ENCODE measurements at regions of chr2 and their contacts with region 1.

Region 1: DNA sequence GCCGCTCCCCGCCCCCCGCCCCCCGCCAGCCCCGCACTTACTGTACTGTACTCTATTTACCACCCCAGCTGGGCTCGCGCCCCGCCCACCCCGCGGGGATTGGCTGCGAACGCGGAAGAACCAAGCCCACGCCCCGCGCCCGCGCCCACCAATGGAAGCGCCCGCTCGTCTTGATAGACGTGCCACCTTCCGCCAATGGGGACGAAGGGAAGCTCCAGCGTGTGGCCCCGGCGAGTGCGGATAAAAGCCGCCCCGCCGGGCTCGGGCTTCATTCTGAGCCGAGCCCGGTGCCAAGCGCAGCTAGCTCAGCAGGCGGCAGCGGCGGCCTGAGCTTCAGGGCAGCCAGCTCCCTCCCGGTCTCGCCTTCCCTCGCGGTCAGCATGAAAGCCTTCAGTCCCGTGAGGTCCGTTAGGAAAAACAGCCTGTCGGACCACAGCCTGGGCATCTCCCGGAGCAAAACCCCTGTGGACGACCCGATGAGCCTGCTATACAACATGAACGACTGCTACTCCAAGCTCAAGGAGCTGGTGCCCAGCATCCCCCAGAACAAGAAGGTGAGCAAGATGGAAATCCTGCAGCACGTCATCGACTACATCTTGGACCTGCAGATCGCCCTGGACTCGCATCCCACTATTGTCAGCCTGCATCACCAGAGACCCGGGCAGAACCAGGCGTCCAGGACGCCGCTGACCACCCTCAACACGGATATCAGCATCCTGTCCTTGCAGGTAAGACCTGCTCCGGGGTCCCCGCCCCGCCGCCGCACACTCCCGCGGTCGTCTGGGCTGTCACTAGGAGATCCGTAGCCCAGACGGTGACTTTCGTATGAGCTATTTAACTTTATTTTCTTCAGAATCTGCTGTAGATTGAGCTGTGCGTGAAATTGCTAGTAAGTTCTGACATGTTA is at the start of gene ID2:
- DNase-seq: peak; percentile 99
- H3K4me3 ChIP-seq: peak within 1 kb of the TSS; percentile 100
- H3K27ac ChIP-seq: peak within 1 kb of the TSS; percentile 100
- H3K4me1 ChIP-seq: peaks cover 32% of the 10 kb centered on the region
- H3K27me3 ChIP-seq: no peaks in the 10 kb centered on the region
- total RNA-seq, gene ID2: 548 and 668 TPM in 2 replicates

Region 2: DNA sequence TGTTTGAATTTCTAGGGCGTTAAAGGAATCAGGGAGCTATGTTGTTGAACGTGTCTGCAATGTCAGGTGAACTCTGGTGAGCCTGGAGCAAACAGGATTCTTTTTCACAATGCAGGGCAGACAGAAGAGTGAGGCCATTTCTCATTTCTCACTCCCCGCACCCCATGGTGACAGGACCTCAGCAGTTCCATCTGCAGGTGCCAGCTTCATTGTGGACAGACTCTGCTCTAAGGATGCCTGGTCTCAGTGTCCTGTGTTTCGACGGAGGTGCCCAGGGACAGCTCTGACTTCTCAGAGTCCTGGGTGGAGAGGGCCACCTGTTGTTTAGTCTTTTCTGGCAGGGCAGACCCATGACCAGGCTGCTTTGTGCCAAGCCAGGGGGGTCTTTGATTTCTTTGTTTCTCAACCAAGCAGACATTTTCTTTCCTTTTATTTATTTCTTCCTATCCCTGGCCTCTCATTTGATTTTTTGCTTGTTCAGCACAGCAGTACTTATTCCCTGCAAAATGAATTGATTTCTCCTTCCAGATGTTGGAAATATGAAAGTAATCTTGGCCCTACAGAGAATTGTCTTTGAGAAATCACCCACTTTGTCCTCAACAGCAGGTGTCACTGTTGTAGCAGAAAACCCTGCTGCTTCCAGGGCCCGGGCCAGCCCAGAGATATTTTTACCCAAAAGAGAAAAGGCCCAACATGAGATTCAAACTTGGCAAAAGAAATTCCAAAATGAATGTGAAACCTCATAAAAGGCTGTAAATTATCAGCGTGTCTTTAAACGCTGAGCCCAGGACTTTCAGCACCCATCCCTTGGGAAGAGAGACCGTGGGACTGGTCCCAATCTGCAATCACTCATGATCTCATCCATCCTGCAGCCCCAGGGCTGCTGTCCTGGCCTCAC is 1563.2 kb before region 1 on chr2:
- in situ Hi-C with region 1: loop called (anchors 25 kb)
- DNase-seq: peak; percentile 73
- H3K4me3 ChIP-seq: no peak overlapping the region
- H3K27ac ChIP-seq: no peak overlapping the region
- H3K4me1 ChIP-seq: no peaks in the 10 kb centered on the region
- H3K27me3 ChIP-seq: no peaks in the 10 kb centered on the region

Region 3: GRCh38 chr2:7203055-7203467 is 1479.0 kb before region 1 on chr2:
- in situ Hi-C with region 1: loop called (anchors 25 kb)
- DNase-seq: peak; percentile 83
- H3K4me3 ChIP-seq: no peak overlapping the region
- H3K27ac ChIP-seq: no peak overlapping the region
- H3K4me1 ChIP-seq: no peaks in the 10 kb centered on the region
- H3K27me3 ChIP-seq: no peaks in the 10 kb centered on the region; the same call in 1 of the 2 replicates

Region 4: GRCh38 chr2:7424481-7424880 is 1257.6 kb before region 1 on chr2:
- in situ Hi-C with region 1: loop called (anchors 5 kb)
- DNase-seq: no peak
- H3K4me3 ChIP-seq: no peak overlapping the region
- H3K27ac ChIP-seq: no peak overlapping the region
- H3K4me1 ChIP-seq: peaks cover 9% of the 10 kb centered on the region
- H3K27me3 ChIP-seq: no peaks in the 10 kb centered on the region; the same call in 1 of the 2 replicates

Region 5: GRCh38 chr2:7835693-7836680 is 846.1 kb before region 1 on chr2:
- in situ Hi-C with region 1: loop called (anchors 25 kb)
- DNase-seq: no peak
- H3K4me3 ChIP-seq: no peak overlapping the region
- H3K27ac ChIP-seq: no peak overlapping the region
- H3K4me1 ChIP-seq: no peaks in the 10 kb centered on the region
- H3K27me3 ChIP-seq: no peaks in the 10 kb centered on the region

Region 6: GRCh38 chr2:8004250-8004681 is 677.8 kb before region 1 on chr2:
- in situ Hi-C with region 1: loop called (anchors 25 kb)
- DNase-seq: peak; percentile 97
- H3K4me3 ChIP-seq: peak overlapping the region; percentile 66
- H3K27ac ChIP-seq: peak overlapping the region; percentile 100
- H3K4me1 ChIP-seq: peaks cover 37% of the 10 kb centered on the region
- H3K27me3 ChIP-seq: no peaks in the 10 kb centered on the region

Measured in GM23248 (cell line).